ENCODE measurements at regions of chr1 and their contacts with region 1.

Region 1: GRCh38 chr1:117895482-117896114 is 33.8 kb downstream of the GDAP2 start:
- DNase-seq: peak; percentile 85
- ATAC-seq: peak; percentile 88
- H3K4me3 Mint-ChIP-seq: no peak overlapping the region
- H3K27ac Mint-ChIP-seq: no peak overlapping the region
- H3K4me1 Mint-ChIP-seq: peaks cover 2% of the 10 kb centered on the region
- H3K27me3 Mint-ChIP-seq: no peaks in the 10 kb centered on the region
- CTCF ChIP-seq: peak; percentile 82

Region 2: DNA sequence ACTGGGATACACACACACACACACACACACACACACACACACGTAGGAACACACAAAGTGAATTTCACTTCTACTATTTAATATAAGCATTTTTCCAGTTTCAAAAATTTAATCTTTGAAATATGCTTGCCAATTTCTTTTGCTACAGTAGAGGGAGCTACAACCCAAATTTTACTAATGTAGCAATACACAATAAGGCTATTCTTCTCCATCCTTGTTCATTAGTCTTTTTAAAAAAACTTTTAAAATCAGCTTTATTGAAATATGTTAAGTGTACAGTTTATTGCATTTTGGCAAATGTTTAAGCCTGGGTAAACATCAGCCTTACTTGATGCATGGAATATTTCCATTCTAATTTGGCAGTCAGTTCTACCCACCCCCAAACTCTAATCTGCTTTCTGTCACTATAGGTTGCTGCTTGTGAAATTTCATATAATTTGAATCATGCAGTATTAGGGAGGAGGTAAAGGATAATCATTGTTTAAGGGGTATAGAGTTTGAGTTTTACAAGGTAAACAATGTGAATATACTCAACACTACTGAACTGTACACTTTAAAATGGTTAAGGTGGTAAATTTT is 382.8 kb before region 1 on chr1:
- CTCF ChIA-PET with region 1: interaction called, 18 read pairs
- POLR2A ChIA-PET with region 1: interaction called, 3 read pairs
- intact Hi-C with region 1: no loop called
- DNase-seq: no peak
- ATAC-seq: no peak
- H3K4me3 Mint-ChIP-seq: no peak overlapping the region
- H3K27ac Mint-ChIP-seq: no peak overlapping the region
- H3K4me1 Mint-ChIP-seq: no peaks in the 10 kb centered on the region
- H3K27me3 Mint-ChIP-seq: no peaks in the 10 kb centered on the region
- CTCF ChIP-seq: peak; percentile 65

Region 3: GRCh38 chr1:117541003-117541402 is 354.6 kb before region 1 on chr1:
- CTCF ChIA-PET with region 1: interaction called, 36 read pairs
- POLR2A ChIA-PET with region 1: no interaction called
- intact Hi-C with region 1: loop called (anchors 10 kb)
- DNase-seq: no peak
- ATAC-seq: peak; percentile 14
- H3K4me3 Mint-ChIP-seq: no peak overlapping the region
- H3K27ac Mint-ChIP-seq: peak overlapping the region; percentile 12
- H3K4me1 Mint-ChIP-seq: peaks cover 18% of the 10 kb centered on the region
- H3K27me3 Mint-ChIP-seq: no peaks in the 10 kb centered on the region
- CTCF ChIP-seq: no peak

Region 4: GRCh38 chr1:117795190-117795589 is 100.4 kb before region 1 on chr1:
- CTCF ChIA-PET with region 1: no interaction called
- POLR2A ChIA-PET with region 1: no interaction called
- intact Hi-C with region 1: no loop called
- DNase-seq: no peak
- ATAC-seq: no peak
- H3K4me3 Mint-ChIP-seq: no peak overlapping the region
- H3K27ac Mint-ChIP-seq: no peak overlapping the region
- H3K4me1 Mint-ChIP-seq: no peaks in the 10 kb centered on the region
- H3K27me3 Mint-ChIP-seq: peaks cover 14% of the 10 kb centered on the region
- CTCF ChIP-seq: no peak

Region 5: GRCh38 chr1:117877823-117878222 is 17.8 kb before region 1 on chr1:
- CTCF ChIA-PET with region 1: interaction called, 46 read pairs
- POLR2A ChIA-PET with region 1: no interaction called
- intact Hi-C with region 1: no loop called
- DNase-seq: no peak
- ATAC-seq: no peak
- H3K4me3 Mint-ChIP-seq: no peak overlapping the region
- H3K27ac Mint-ChIP-seq: no peak overlapping the region
- H3K4me1 Mint-ChIP-seq: no peaks in the 10 kb centered on the region
- H3K27me3 Mint-ChIP-seq: no peaks in the 10 kb centered on the region
- CTCF ChIP-seq: no peak

Region 6: DNA sequence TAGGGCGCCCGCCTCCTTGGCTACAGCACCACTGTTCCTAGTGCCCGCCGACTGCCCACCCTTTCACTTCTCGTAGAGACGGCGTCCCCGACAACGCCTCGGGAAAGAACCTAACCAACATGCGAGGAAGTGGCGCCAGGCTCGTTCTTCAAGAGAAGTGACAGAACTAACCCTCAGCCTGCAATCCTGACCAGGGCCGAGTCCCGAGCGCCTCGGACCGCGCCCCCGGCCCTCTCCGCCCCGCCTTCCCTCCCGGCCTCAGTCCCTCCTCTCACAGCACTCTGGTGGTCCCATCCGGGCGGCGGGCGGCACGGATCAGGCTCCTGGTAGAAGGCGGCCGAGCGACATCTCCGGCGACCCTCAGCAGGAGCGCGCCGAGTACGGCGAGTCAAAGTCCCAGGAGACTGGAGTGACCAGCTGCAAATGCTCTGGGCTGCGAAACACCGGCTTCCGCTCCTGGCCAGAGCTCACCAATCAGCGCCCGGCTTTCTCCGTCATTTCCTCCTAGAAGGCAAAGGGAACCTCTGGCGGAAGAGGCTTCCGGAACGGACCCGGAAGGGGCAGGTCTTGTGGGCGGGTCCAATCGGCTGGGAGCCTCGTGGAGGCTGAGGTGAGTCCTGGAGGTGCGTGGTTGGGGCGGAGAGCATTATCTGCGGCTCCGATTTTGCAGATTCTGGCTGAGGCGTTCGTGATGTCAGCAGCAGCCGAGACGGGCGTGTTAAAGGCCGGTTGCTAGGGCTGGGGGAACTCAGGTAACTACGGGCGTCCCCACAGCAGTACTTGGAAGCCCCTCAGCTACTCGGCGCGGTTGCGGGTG is 33.8 kb after region 1 on chr1 and contains the starts of genes GDAP2 and WDR3:
- CTCF ChIA-PET with region 1: interaction called, 17 read pairs
- POLR2A ChIA-PET with region 1: interaction called, 3 read pairs
- intact Hi-C with region 1: no loop called
- DNase-seq: peak; percentile 98
- ATAC-seq: peak; percentile 97
- H3K4me3 Mint-ChIP-seq: peak within 1 kb of the TSS; percentile 99
- H3K27ac Mint-ChIP-seq: peak within 1 kb of the TSS; percentile 91
- H3K4me1 Mint-ChIP-seq: peaks cover 58% of the 10 kb centered on the region
- H3K27me3 Mint-ChIP-seq: no peaks in the 10 kb centered on the region
- CTCF ChIP-seq: no peak
- total RNA-seq, gene GDAP2: 18.5 to 20.4 TPM
- total RNA-seq, gene WDR3: 61.6 to 63.0 TPM

Measured in activated CD8-positive, alpha-beta T cell treated with anti-CD3 and anti-CD28 coated beads for 36 hours (primary cell).